Activated CD8-positive, alpha-beta memory T cell treated with anti-CD3 and anti-CD28 coated beads, Interleukin-2, amount 10 ng/mL, durations not matched to agents 7 days and 5 days (primary cell): ENCODE measurements at regions of chr18 and their contacts with region 1.

Region 1: GRCh38 chr18:63963615-63964256 is 6.1 kb upstream of the SERPINB8 start:
- DNase-seq: peak; percentile 65
- ATAC-seq: peak; percentile 71
- H3K4me3 Mint-ChIP-seq: no peak overlapping the region
- H3K27ac Mint-ChIP-seq: no peak overlapping the region
- H3K4me1 Mint-ChIP-seq: no peaks in the 10 kb centered on the region
- H3K27me3 Mint-ChIP-seq: peaks cover 19% of the 10 kb centered on the region

Region 2: DNA sequence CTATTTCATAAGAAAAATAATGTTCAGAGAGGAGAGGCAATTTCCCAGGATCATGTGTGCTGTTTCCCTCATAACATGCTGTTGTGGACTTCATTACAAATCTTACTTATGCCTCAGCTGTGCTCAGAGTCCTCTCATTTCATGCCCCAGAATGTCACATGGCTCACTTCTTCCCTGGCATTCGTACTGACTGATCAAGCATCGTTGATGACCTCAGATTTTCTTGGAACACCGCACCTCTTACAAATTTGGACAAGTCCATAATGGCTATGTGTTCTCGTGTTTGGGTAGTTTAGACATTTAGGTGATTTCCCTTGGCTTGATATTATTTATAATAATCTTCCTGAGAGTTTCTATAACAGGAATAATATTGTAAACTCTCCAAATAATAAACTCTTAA is 155.6 kb before region 1 on chr18:
- CTCF ChIA-PET with region 1: no interaction called
- DNase-seq: no peak
- ATAC-seq: no peak
- H3K4me3 Mint-ChIP-seq: no peak overlapping the region
- H3K27ac Mint-ChIP-seq: no peak overlapping the region
- H3K4me1 Mint-ChIP-seq: no peaks in the 10 kb centered on the region
- H3K27me3 Mint-ChIP-seq: peaks cover 12% of the 10 kb centered on the region

Region 3: DNA sequence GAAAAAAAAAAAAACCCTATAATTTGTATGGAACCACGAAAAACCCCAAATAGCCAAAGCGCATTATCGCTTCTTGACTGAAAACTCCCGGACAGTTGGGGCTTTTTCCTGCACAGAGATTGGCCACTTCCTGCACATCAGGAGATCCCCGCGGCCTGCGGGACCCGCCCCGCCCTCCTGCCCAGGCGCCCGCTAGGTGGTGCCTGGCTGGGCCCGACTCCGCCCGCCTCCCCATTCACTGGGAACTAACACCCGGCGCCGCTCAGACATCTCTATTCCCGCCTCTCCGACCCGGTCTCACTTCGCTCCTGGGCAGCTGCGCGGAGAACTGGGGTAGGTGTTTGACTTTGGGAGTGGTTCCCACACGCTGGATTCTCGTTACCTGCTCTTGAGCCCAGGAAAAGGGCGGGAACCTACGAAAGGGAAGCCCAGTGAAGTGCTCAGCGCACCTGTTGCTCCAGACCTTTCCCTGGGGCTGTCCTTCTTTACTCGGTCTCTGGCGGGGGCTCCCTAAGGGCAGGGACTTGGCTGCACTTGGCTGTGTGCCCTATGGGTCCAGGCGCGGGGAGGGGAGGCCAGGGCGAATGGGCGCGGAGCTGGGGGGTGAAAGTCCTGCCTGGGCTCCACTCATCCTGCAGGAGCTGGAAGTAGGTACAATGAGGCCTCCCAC is 14.5 kb before region 1 on chr18 and contains the start of gene HMSD:
- CTCF ChIA-PET with region 1: interaction called, 23 read pairs
- DNase-seq: peak; percentile 69
- ATAC-seq: peak; percentile 93
- H3K4me3 Mint-ChIP-seq: peak within 1 kb of the TSS; percentile 62
- H3K27ac Mint-ChIP-seq: peak within 1 kb of the TSS; percentile 56
- H3K4me1 Mint-ChIP-seq: peaks cover 30% of the 10 kb centered on the region
- H3K27me3 Mint-ChIP-seq: peaks cover 45% of the 10 kb centered on the region
- total RNA-seq, gene HMSD: 1.6 to 5.5 TPM

Region 4: DNA sequence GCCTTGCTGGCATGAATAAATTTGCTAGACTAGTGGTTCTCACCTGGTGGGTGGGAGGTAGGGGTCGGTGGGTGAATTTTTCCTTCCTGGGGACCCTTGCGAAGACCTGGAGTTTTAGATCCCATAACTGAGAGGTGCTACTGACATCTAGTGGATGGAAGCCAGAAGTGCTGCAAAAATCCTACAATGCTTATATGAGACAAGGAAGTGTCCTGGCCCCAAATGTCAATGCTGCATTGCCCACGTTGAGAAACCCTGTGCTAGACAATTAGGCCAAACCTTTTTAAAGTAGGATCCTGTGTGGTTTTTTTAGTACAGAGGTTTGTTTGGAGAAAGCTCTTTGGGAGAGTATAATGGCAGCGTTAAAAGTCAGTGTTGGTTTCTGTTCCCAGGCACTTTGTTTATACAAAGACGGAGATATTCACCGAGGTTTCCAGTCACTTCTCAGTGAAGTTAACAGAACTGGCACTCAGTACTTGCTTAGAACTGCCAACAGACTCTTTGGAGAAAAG is 15.7 kb after region 1 on chr18:
- CTCF ChIA-PET with region 1: interaction called, 17 read pairs
- DNase-seq: peak; percentile 67
- ATAC-seq: peak; percentile 80
- H3K4me3 Mint-ChIP-seq: peak overlapping the region; percentile 47
- H3K27ac Mint-ChIP-seq: peak overlapping the region; percentile 66
- H3K4me1 Mint-ChIP-seq: peaks cover 24% of the 10 kb centered on the region
- H3K27me3 Mint-ChIP-seq: no peaks in the 10 kb centered on the region